Tibial artery (tissue), 4 donors: ENCODE measurements at regions of chr7 and their contacts with region 1.

Region 1: GRCh38 chr7:35701287-35701900 is 6.5 kb upstream of the HERPUD2 start:
- DNase-seq: no peak
- H3K4me3 ChIP-seq: no peak overlapping the region
- H3K27ac ChIP-seq: no peak overlapping the region
- H3K4me1 ChIP-seq: peaks cover 0 to 2% (median 0%) of the 10 kb centered on the region in 4 donors
- H3K27me3 ChIP-seq: no peaks in the 10 kb centered on the region
- CTCF ChIP-seq: no peak

Region 2: GRCh38 chr7:35647171-35647574 is 54.2 kb before region 1 on chr7:
- intact Hi-C with region 1: no loop called
- DNase-seq: no peak
- H3K4me3 ChIP-seq: no peak overlapping the region
- H3K27ac ChIP-seq: no peak overlapping the region
- H3K4me1 ChIP-seq: peaks cover 0 to 42% (median 12%) of the 10 kb centered on the region in 4 donors
- H3K27me3 ChIP-seq: no peaks in the 10 kb centered on the region
- CTCF ChIP-seq: no peak

Region 3: GRCh38 chr7:35849158-35849831 is 147.9 kb after region 1 on chr7:
- intact Hi-C with region 1: no loop called
- DNase-seq: no peak
- H3K4me3 ChIP-seq: no peak overlapping the region
- H3K27ac ChIP-seq: no peak overlapping the region
- H3K4me1 ChIP-seq: peaks cover 0 to 69% (median 11%) of the 10 kb centered on the region in 4 donors
- H3K27me3 ChIP-seq: no peaks in the 10 kb centered on the region
- CTCF ChIP-seq: no peak

Region 4: GRCh38 chr7:36147324-36147723 is 445.9 kb after region 1 on chr7:
- intact Hi-C with region 1: loop called (anchors 10 kb)
- DNase-seq: no peak
- H3K4me3 ChIP-seq: no peak overlapping the region
- H3K27ac ChIP-seq: no peak overlapping the region
- H3K4me1 ChIP-seq: peaks cover 0 to 3% (median 1%) of the 10 kb centered on the region in 4 donors
- H3K27me3 ChIP-seq: no peaks in the 10 kb centered on the region
- CTCF ChIP-seq: no peak